ENCODE measurements at regions of chr1 and their contacts with region 1.

Region 1: GRCh38 chr1:205485338-205486228 is 18.9 kb upstream of the CDK18 start:
- DNase-seq: peak; percentile 56
- H3K4me3 ChIP-seq: no peak overlapping the region
- H3K27ac ChIP-seq: no peak overlapping the region
- H3K4me1 ChIP-seq: peaks cover 16% of the 10 kb centered on the region
- H3K27me3 ChIP-seq: no peaks in the 10 kb centered on the region
- CTCF ChIP-seq: peak; percentile 76 to 96

Region 2: GRCh38 chr1:205273551-205273982 is 212.0 kb before region 1 on chr1:
- CTCF ChIA-PET with region 1: interaction called, 8 read pairs
- dilution Hi-C with region 1: no loop called
- in situ Hi-C with region 1: no loop called
- intact Hi-C with region 1: loop called (anchors 1 kb)
- DNase-seq: peak; percentile 65
- H3K4me3 ChIP-seq: no peak overlapping the region
- H3K27ac ChIP-seq: no peak overlapping the region
- H3K4me1 ChIP-seq: peaks cover 29% of the 10 kb centered on the region
- H3K27me3 ChIP-seq: no peaks in the 10 kb centered on the region
- CTCF ChIP-seq: peak; percentile 99

Region 3: DNA sequence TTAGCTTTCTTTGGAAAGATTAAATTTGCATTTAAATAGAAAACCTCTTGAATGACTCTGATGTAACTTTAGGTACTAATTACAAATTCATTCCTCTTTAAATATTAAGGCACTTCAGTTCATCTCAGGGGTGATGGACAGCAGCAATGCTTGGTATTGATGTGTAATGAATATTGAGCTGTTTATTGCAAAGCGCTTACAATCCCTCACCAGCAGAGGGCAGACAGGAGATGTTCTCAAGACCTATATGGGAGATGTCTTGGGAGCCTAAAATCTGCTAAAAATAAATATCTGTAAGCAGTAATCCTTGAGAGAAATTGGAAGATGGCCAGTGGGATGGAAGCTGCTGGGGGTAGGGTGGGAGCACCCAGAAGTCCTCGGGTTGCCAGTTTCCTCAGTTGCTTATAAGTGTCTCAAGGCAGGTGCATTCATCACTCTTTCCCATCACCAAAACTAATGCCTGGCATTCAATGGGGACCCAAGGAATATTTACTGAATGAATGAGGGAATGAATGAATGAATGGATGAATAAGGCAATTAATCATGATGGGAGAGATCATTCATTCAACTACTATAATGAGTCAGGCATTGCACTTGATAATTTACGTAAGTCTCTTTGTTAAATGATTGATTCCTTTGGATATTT is 131.2 kb before region 1 on chr1:
- CTCF ChIA-PET with region 1: interaction called, 10 read pairs
- dilution Hi-C with region 1: no loop called
- in situ Hi-C with region 1: no loop called
- intact Hi-C with region 1: loop called (anchors 1 kb)
- DNase-seq: peak; percentile 42
- H3K4me3 ChIP-seq: no peak overlapping the region
- H3K27ac ChIP-seq: no peak overlapping the region
- H3K4me1 ChIP-seq: peaks cover 10% of the 10 kb centered on the region
- H3K27me3 ChIP-seq: no peaks in the 10 kb centered on the region
- CTCF ChIP-seq: peak; percentile 85 to 87

Region 4: GRCh38 chr1:205422993-205423625 is 62.5 kb before region 1 on chr1:
- CTCF ChIA-PET with region 1: interaction called, 4 read pairs
- dilution Hi-C with region 1: no loop called
- in situ Hi-C with region 1: loop called (anchors 10 kb)
- intact Hi-C with region 1: loop called (anchors 1 kb)
- DNase-seq: no peak
- H3K4me3 ChIP-seq: no peak overlapping the region
- H3K27ac ChIP-seq: no peak overlapping the region
- H3K4me1 ChIP-seq: no peaks in the 10 kb centered on the region
- H3K27me3 ChIP-seq: peaks cover 12% of the 10 kb centered on the region
- CTCF ChIP-seq: peak in 1 of 2 donors; percentile 34

Region 5: DNA sequence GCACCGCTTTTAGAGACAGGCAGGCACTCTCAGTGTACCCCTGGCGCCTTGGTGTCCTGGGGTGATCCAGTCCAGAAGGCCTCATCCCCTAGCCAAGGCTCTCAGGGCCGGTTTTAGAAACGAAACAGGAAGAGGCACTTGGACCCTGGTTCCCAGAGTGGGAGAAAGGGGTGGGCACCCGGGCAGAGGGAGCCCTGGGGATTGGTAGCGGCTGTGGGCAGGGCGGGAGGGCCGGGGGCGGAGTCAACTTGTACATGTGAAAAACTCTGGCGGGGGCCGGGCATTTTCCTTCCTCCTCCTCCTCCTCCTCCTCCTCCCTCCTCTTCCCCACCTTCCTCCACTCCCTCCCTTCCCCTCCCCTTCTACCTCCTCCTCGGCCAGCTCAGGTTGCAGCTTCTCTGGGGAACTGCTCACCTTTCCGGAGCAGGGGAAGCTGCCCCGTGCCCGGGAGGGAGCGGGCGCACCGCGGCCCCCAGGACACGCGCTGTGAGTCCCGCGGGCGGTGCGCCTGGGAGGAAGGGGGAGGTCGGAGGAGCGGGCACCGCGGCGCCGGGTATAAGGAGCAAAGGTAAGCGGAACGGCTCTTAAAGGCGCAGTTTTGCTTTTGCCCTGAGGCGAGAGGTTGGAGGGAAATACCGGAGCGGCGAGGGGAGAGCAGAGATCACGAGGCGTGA is 18.9 kb after region 1 on chr1 and contains the start of gene CDK18:
- CTCF ChIA-PET with region 1: no interaction called
- dilution Hi-C with region 1: no loop called
- in situ Hi-C with region 1: no loop called
- intact Hi-C with region 1: loop called (anchors 2 kb)
- DNase-seq: peak; percentile 85
- H3K4me3 ChIP-seq: peak within 1 kb of the TSS; percentile 71 to 84 (median 71)
- H3K27ac ChIP-seq: peak within 1 kb of the TSS; percentile 65
- H3K4me1 ChIP-seq: peaks cover 29% of the 10 kb centered on the region
- H3K27me3 ChIP-seq: no peaks in the 10 kb centered on the region
- CTCF ChIP-seq: no peak
- total RNA-seq, gene CDK18: 23.2 to 28.6 TPM